Heart left ventricle (tissue), 16 donors: ENCODE measurements at regions of chr1 and their contacts with region 1.

Region 1: GRCh38 chr1:19758227-19758830 is 41.4 kb downstream of the TMCO4 start:
- DNase-seq: no peak
- ATAC-seq: no peak
- H3K4me3 ChIP-seq: no peak overlapping the region
- H3K27ac ChIP-seq: no peak overlapping the region
- H3K4me1 ChIP-seq: no peaks in the 10 kb centered on the region
- H3K27me3 ChIP-seq: no peaks in the 10 kb centered on the region
- CTCF ChIP-seq: no peak
- POLR2A ChIP-seq: no peak

Region 2: GRCh38 chr1:19698181-19698580 is 60.1 kb before region 1 on chr1:
- intact Hi-C with region 1: loop called in 1 of 10 experiments (anchors 10 kb)
- DNase-seq: no peak
- ATAC-seq: no peak
- H3K4me3 ChIP-seq: no peak overlapping the region
- H3K27ac ChIP-seq: no peak overlapping the region
- H3K4me1 ChIP-seq: no peaks in the 10 kb centered on the region
- H3K27me3 ChIP-seq: no peaks in the 10 kb centered on the region
- CTCF ChIP-seq: no peak
- POLR2A ChIP-seq: no peak

Region 3: GRCh38 chr1:19903600-19903999 is 145.3 kb after region 1 on chr1:
- intact Hi-C with region 1: no loop called
- DNase-seq: no peak
- ATAC-seq: no peak
- H3K4me3 ChIP-seq: no peak overlapping the region
- H3K27ac ChIP-seq: no peak overlapping the region
- H3K4me1 ChIP-seq: no peaks in the 10 kb centered on the region
- H3K27me3 ChIP-seq: no peaks in the 10 kb centered on the region
- CTCF ChIP-seq: no peak
- POLR2A ChIP-seq: no peak